Gastrocnemius medialis (tissue), 4 donors: ENCODE measurements at regions of chr7 and their contacts with region 1.

Region 1: GRCh38 chr7:137898839-137899721 is 52.3 kb upstream of the DGKI start:
- DNase-seq: peak; percentile 69 to 79
- ATAC-seq: peak; percentile 83 to 90
- H3K4me3 ChIP-seq: peak overlapping the region in 3 of 4 donors; percentile 15 to 39 (median 17)
- H3K27ac ChIP-seq: peak overlapping the region; percentile 28 to 55 (median 40)
- H3K4me1 ChIP-seq: peaks cover 19 to 23% of the 10 kb centered on the region in 2 donors
- H3K27me3 ChIP-seq: no peaks in the 10 kb centered on the region
- CTCF ChIP-seq: peak; percentile 89 to 99 (median 93)
- POLR2A ChIP-seq: no peak

Region 2: DNA sequence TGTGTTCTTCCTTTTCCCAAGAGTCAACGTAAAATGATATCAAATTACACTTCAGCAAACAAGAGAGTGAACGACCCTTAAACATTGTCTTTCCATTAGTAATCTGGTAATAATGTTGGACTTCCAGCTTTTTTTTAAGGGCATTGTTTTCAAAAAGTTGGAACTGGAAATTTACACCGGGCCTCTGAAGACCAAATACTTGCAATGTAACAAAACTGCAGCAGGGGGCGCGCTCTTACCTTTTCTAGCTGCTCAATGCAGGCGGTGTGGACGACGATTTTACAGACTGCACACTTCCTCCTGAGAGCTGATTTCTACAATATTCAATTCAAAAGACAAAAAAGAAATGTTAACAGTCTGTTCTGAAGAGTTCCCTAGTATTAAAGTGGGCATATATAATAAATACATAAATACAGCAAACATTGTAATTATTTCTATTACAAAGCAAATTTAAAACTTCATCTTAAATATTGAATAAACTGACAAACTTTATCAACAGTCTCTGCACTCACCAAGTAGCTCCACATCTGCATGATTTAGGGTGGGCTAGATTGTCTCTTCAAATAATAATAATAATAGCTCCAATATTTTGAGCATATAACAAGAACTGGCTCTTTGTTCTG is 242.7 kb before region 1 on chr7:
- in situ Hi-C with region 1: loop called (anchors 5 kb)
- intact Hi-C with region 1: loop called (anchors 1 kb)
- DNase-seq: peak; percentile 26 to 49
- ATAC-seq: peak; percentile 66 to 70
- H3K4me3 ChIP-seq: no peak overlapping the region
- H3K27ac ChIP-seq: no peak overlapping the region
- H3K4me1 ChIP-seq: peaks cover 0 to 8% of the 10 kb centered on the region in 2 donors
- H3K27me3 ChIP-seq: no peaks in the 10 kb centered on the region
- CTCF ChIP-seq: peak; percentile 44 to 74 (median 53)
- POLR2A ChIP-seq: no peak

Region 3: GRCh38 chr7:137717811-137718271 is 181.2 kb before region 1 on chr7:
- in situ Hi-C with region 1: no loop called
- intact Hi-C with region 1: no loop called
- DNase-seq: no peak
- ATAC-seq: no peak
- H3K4me3 ChIP-seq: no peak overlapping the region
- H3K27ac ChIP-seq: no peak overlapping the region
- H3K4me1 ChIP-seq: no peaks in the 10 kb centered on the region
- H3K27me3 ChIP-seq: no peaks in the 10 kb centered on the region
- CTCF ChIP-seq: no peak
- POLR2A ChIP-seq: no peak

Region 4: GRCh38 chr7:137862964-137863363 is 36.1 kb before region 1 on chr7:
- in situ Hi-C with region 1: loop called in 1 of 4 experiments (anchors 5 kb)
- intact Hi-C with region 1: loop called (anchors 1 kb)
- DNase-seq: no peak
- ATAC-seq: no peak
- H3K4me3 ChIP-seq: no peak overlapping the region
- H3K27ac ChIP-seq: no peak overlapping the region
- H3K4me1 ChIP-seq: peaks cover 8 to 9% of the 10 kb centered on the region in 2 donors
- H3K27me3 ChIP-seq: no peaks in the 10 kb centered on the region
- CTCF ChIP-seq: no peak
- POLR2A ChIP-seq: no peak

Region 5: DNA sequence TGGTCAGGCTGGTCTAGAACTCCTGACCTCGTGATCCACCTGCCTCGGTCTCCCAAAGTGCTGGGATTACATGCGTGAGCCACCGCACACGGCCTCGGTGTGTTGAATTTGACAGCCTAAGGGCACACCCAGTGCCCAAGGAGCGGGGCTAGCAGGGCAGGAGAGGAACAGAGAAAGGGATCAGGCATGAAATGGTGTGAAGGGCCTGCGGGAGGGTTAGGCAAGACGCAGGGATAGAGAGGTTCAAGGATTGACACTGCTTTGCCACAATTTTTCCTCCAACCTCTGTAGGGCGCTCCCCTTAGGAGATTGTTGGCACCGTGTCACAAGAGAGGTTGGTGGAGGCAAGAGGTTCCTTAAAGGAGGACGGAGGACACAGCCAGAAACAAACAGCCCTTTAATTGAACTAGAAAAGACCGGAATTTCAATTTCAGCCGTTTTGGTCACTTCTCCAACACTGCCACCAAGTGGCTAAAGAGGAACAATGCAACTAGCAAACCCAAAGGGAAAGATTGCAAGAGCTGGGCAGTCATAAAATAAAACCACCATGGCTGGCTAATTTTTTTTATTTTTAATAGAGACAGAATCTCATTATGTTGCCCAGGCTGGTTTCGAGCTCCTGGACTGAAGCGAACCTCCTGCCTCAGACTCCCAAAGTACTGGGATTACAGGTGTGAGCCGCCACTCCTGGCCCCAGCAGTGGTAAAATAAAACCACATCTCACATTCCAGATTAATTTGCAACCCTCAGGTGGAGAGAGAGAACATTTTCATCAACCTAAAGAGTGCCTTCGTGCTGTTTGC is 109.7 kb after region 1 on chr7:
- in situ Hi-C with region 1: no loop called
- intact Hi-C with region 1: loop called (anchors 1 kb)
- DNase-seq: peak in 1 of 2 donors; percentile 21
- ATAC-seq: peak; percentile 56 to 70
- H3K4me3 ChIP-seq: no peak overlapping the region
- H3K27ac ChIP-seq: no peak overlapping the region
- H3K4me1 ChIP-seq: no peaks in the 10 kb centered on the region
- H3K27me3 ChIP-seq: no peaks in the 10 kb centered on the region
- CTCF ChIP-seq: peak; percentile 84 to 92 (median 88)
- POLR2A ChIP-seq: no peak